ENCODE measurements at regions of chr4 and their contacts with region 1.

Region 1: GRCh38 chr4:22356987-22357596 is 158.8 kb downstream of the ADGRA3 start:
- DNase-seq: no peak
- H3K4me3 Mint-ChIP-seq: no peak overlapping the region
- H3K27ac Mint-ChIP-seq: no peak overlapping the region
- H3K4me1 Mint-ChIP-seq: peaks cover 2% of the 10 kb centered on the region
- H3K27me3 Mint-ChIP-seq: peaks cover 4% of the 10 kb centered on the region

Region 2: GRCh38 chr4:21790438-21791029 is 566.6 kb before region 1 on chr4:
- intact Hi-C with region 1: loop called (anchors 10 kb)
- DNase-seq: no peak
- H3K4me3 Mint-ChIP-seq: no peak overlapping the region
- H3K27ac Mint-ChIP-seq: no peak overlapping the region
- H3K4me1 Mint-ChIP-seq: no peaks in the 10 kb centered on the region
- H3K27me3 Mint-ChIP-seq: no peaks in the 10 kb centered on the region

Region 3: GRCh38 chr4:22237155-22237751 is 119.8 kb before region 1 on chr4:
- intact Hi-C with region 1: loop called (anchors 1 kb)
- DNase-seq: peak; percentile 57
- H3K4me3 Mint-ChIP-seq: peak overlapping the region; percentile 64
- H3K27ac Mint-ChIP-seq: no peak overlapping the region
- H3K4me1 Mint-ChIP-seq: peaks cover 21% of the 10 kb centered on the region
- H3K27me3 Mint-ChIP-seq: no peaks in the 10 kb centered on the region

Region 4: DNA sequence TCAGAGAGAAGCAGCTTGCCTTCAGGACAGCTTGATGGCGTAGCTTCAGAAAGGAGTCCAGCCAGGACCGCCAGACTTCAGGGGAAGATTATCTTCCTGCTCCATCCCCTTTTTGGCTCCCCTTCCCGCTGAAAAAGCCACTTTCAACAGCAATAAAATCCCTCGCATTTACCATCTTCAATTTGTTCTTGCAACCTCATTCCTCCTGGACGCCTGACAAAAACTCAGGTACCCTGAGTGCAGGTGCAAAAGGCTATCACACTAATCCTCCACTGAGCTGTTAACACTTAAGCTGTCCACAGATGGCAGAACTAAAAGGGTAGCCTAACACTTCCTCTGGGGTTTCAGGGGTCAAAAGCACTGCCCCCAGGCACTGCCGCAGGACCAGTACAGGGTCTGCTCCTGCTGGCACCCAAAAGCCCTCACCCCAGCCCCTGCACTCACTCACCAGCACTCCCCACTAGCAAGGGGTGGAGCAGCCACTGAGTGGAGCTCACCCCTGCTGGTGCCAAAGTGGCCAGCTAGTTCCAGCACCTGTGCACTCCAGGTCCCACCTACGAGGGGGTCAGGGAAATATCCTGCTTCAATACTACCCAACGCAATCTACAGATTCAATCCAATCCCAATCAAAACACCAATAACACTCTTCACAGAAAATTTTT is 12.9 kb after region 1 on chr4:
- intact Hi-C with region 1: no loop called
- DNase-seq: no peak
- H3K4me3 Mint-ChIP-seq: no peak overlapping the region
- H3K27ac Mint-ChIP-seq: no peak overlapping the region
- H3K4me1 Mint-ChIP-seq: no peaks in the 10 kb centered on the region
- H3K27me3 Mint-ChIP-seq: no peaks in the 10 kb centered on the region

Region 5: GRCh38 chr4:22398671-22399070 is 41.6 kb after region 1 on chr4:
- intact Hi-C with region 1: no loop called
- DNase-seq: no peak
- H3K4me3 Mint-ChIP-seq: no peak overlapping the region
- H3K27ac Mint-ChIP-seq: no peak overlapping the region
- H3K4me1 Mint-ChIP-seq: peaks cover 14% of the 10 kb centered on the region
- H3K27me3 Mint-ChIP-seq: no peaks in the 10 kb centered on the region